ENCODE measurements at regions of chr3 and their contacts with region 1.

Region 1: GRCh38 chr3:133821767-133822638 is 16.4 kb downstream of the SRPRB start:
- DNase-seq: no peak
- H3K4me3 Mint-ChIP-seq: no peak overlapping the region
- H3K27ac Mint-ChIP-seq: no peak overlapping the region
- H3K4me1 Mint-ChIP-seq: no peaks in the 10 kb centered on the region
- H3K27me3 Mint-ChIP-seq: no peaks in the 10 kb centered on the region

Region 2: DNA sequence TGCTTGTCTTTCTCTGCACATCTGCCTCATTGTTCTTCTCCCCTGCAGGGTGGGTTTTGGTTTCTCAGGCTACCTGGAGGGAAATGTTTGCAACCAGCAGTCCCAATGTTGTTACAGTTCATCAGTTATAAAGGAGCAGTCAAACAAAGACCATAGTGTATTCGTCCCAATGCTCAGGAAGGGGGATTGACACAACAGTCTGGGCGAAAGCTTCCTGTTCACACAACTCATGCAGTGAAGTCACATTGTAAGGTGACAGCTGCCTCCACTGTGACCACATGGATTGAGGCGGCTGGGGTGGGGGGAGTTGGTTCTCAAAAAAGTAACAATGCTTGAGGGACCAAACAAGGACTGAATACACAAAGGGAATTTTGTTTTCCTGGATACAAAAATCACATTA is 104.6 kb before region 1 on chr3:
- intact Hi-C with region 1: no loop called
- DNase-seq: peak; percentile 27
- H3K4me3 Mint-ChIP-seq: no peak overlapping the region
- H3K27ac Mint-ChIP-seq: no peak overlapping the region
- H3K4me1 Mint-ChIP-seq: no peaks in the 10 kb centered on the region
- H3K27me3 Mint-ChIP-seq: peaks cover 14% of the 10 kb centered on the region

Region 3: DNA sequence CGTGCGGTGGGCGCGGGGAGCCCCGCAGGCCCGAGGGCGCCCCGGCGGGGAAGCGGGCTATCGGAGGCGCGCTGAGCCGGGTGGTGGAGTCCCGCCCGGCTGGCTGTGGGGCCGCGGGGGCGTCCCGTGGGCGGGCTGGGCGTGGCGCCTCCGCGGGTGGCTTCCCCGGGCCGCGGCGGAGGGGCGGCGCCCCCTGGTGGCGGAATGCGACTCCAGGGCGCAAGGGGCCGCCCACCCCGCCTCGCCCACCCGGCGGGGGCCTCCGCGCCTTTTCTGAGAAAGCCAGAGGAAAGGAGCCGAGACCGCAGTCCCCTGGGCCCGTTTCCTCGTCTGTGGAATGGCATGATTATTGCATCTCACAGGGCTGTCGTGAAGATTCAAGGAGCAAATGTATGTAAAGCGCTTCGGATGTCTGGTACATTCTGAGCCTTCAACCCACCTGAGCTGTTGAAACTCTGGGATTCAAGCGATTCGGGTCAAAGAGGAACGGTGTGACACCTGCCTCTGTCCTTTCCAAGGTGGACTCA is 105.6 kb after region 1 on chr3:
- intact Hi-C with region 1: loop called (anchors 1 kb)
- DNase-seq: peak; percentile 92
- H3K4me3 Mint-ChIP-seq: peak overlapping the region; percentile 64
- H3K27ac Mint-ChIP-seq: no peak overlapping the region
- H3K4me1 Mint-ChIP-seq: peaks cover 5% of the 10 kb centered on the region
- H3K27me3 Mint-ChIP-seq: peaks cover 33% of the 10 kb centered on the region